GM12878 (cell line): ENCODE measurements at regions of chrX and their contacts with region 1.

Region 1: GRCh38 chrX:35380808-35381700 is 417.1 kb upstream of the MAGEB16 start:
- DNase-seq: peak; percentile 23
- ATAC-seq: peak; percentile 90
- H3K4me3 ChIP-seq: no peak overlapping the region
- H3K27ac ChIP-seq: no peak overlapping the region
- H3K4me1 ChIP-seq: peaks cover 3% of the 10 kb centered on the region
- H3K27me3 ChIP-seq: no peaks in the 10 kb centered on the region
- CTCF ChIP-seq: peak; percentile 71 to 86 (median 77)
- EP300 ChIP-seq: no peak
- POLR2A ChIP-seq: no peak
- RAD21 ChIP-seq: peak; percentile 83

Region 2: DNA sequence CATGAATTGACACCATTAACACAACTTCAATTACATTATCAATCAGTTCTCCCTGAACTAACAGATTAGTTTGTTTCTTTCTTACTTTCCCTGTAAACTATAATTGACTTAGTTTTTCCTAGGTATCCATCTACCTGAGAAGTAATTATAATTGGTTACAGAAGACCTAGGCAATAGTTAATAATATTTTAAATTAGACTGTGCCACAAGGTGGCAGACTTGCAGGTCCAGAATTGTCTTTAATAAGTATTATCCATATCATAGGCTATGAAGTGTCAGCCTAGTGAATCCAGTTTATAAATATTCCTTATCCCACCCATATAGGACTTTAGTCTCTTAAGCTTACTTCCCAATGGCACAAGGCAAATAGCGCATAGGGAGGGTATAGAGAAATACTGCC is 487.3 kb before region 1 on chrX:
- CTCF ChIA-PET with region 1: no interaction called
- POLR2A ChIA-PET with region 1: no interaction called
- RAD21 ChIA-PET with region 1: no interaction called
- SMC1A ChIA-PET with region 1: no interaction called
- in situ Hi-C with region 1: no loop called
- intact Hi-C with region 1: no loop called
- DNase-seq: no peak
- ATAC-seq: peak; percentile 55; the same call in 1 of the 3 replicates
- H3K4me3 ChIP-seq: no peak overlapping the region
- H3K27ac ChIP-seq: no peak overlapping the region
- H3K4me1 ChIP-seq: no peaks in the 10 kb centered on the region
- H3K27me3 ChIP-seq: no peaks in the 10 kb centered on the region
- CTCF ChIP-seq: peak in 1 of 3 experiments; percentile 22; a peak in 2 of 6 replicates
- EP300 ChIP-seq: no peak
- POLR2A ChIP-seq: no peak
- RAD21 ChIP-seq: no peak

Region 3: DNA sequence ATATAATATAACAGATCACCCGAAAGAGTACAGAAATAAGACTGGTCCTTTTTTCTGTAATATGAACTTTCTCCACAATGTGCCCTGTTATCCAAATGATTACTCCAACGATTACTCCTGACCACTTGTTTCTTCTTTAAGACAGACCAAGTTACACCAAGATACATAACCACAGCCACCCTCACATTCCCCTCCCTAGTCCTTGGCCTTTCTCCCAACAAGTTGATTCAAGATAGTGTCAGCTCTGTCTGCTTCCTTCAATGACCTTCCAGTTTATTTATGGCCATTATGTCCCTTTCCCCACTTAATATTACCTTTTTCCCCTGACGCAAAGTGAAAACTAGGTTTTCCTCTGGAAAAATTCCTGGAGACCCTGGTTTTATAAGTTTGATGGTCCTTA is 41.3 kb before region 1 on chrX:
- CTCF ChIA-PET with region 1: no interaction called
- POLR2A ChIA-PET with region 1: no interaction called
- RAD21 ChIA-PET with region 1: no interaction called
- SMC1A ChIA-PET with region 1: no interaction called
- in situ Hi-C with region 1: no loop called
- intact Hi-C with region 1: no loop called
- DNase-seq: no peak
- ATAC-seq: no peak
- H3K4me3 ChIP-seq: no peak overlapping the region
- H3K27ac ChIP-seq: no peak overlapping the region
- H3K4me1 ChIP-seq: no peaks in the 10 kb centered on the region
- H3K27me3 ChIP-seq: no peaks in the 10 kb centered on the region
- CTCF ChIP-seq: no peak
- EP300 ChIP-seq: no peak
- POLR2A ChIP-seq: no peak
- RAD21 ChIP-seq: no peak

Region 4: DNA sequence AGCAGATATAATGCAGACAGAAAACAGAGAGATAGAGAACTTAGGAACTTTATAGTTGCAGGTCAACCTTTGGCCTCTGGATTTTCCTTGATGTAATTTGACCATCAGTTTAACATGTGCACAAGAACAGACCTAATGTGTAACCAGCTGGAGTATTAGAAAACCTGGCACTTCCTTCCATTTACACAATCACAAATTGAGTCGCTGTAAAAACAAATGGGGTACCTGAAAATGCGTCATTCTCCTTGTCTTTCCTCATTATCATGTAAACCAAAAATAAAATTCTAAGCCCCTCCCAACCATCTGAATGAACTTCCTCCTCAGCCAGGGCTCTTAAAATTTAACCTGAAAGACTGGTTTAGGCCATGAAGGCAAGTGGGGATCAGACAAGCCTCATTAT is 58.6 kb after region 1 on chrX:
- CTCF ChIA-PET with region 1: interaction called, 4 read pairs
- POLR2A ChIA-PET with region 1: no interaction called
- RAD21 ChIA-PET with region 1: no interaction called
- SMC1A ChIA-PET with region 1: interaction called, 5 read pairs
- in situ Hi-C with region 1: no loop called
- intact Hi-C with region 1: loop called (anchors 5 kb)
- DNase-seq: no peak
- ATAC-seq: no peak
- H3K4me3 ChIP-seq: no peak overlapping the region
- H3K27ac ChIP-seq: no peak overlapping the region
- H3K4me1 ChIP-seq: peaks cover 4% of the 10 kb centered on the region; the same call in 1 of the 2 replicates
- H3K27me3 ChIP-seq: no peaks in the 10 kb centered on the region
- CTCF ChIP-seq: no peak
- EP300 ChIP-seq: no peak
- POLR2A ChIP-seq: no peak
- RAD21 ChIP-seq: no peak

Region 5: DNA sequence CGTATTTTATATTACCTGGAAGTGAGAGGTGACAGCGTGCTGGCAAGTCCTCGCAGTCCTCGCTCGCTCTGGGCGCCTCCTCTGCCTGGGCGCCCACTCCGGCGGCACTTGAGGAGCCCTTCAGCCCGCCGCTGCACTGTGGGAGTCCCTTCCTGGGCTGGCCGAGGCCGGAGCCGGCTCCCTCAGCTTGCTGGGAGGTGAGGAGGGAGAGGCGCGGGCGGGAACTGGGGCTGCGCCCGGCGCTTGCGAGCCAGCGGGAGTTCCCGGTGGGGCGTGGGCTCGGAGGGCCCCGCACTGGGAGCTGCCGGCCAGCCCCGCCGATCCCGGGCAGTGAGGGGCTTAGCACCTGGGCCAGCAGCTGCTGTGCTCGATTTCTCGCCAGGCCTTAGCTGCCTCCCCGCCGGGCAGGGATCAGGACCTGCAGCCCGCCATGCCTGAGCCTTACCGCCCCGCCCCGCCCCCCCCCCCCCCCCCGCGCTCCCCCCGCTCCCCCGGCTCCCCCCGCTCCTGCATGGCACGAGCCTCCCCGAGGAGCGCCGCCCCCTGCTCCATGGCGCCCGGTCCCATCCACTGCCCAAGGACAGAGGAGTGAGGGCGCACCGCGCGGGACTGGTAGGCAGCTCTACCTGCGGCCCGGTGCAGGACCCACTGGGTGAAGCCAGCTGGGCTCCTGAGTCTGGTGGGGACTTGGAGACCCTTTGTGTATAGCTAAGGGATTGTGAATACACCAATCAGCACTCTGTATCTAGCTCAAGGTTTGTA is 118.2 kb after region 1 on chrX:
- CTCF ChIA-PET with region 1: no interaction called
- POLR2A ChIA-PET with region 1: no interaction called
- RAD21 ChIA-PET with region 1: no interaction called
- SMC1A ChIA-PET with region 1: no interaction called
- in situ Hi-C with region 1: no loop called
- intact Hi-C with region 1: loop called (anchors 5 kb)
- DNase-seq: no peak
- ATAC-seq: no peak
- H3K4me3 ChIP-seq: no peak overlapping the region
- H3K27ac ChIP-seq: no peak overlapping the region
- H3K4me1 ChIP-seq: no peaks in the 10 kb centered on the region
- H3K27me3 ChIP-seq: no peaks in the 10 kb centered on the region; a peak in 1 of 4 replicates
- CTCF ChIP-seq: no peak
- EP300 ChIP-seq: no peak
- POLR2A ChIP-seq: no peak
- RAD21 ChIP-seq: no peak

Region 6: DNA sequence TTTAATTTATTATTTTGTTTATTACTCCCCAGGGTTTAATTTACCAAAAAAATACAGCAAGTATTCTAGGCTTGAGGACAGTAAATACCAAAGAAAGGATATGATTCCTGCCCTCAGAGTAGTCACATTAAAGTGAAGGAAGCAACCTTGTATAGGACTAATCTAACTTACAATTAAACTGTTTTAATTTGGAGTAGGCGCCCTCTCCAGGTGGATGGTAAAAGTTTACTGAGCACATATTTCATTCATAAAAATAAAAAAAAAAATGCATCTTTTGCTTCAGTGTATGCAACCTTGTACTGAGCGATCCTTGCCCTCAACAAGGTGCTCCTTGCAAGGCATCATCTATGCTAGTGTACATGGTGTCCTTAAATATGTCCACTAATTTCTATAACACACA is 345.1 kb after region 1 on chrX:
- CTCF ChIA-PET with region 1: interaction called, 27 read pairs
- POLR2A ChIA-PET with region 1: no interaction called
- RAD21 ChIA-PET with region 1: interaction called, 20 read pairs
- SMC1A ChIA-PET with region 1: interaction called, 12 read pairs
- in situ Hi-C with region 1: loop called (anchors 10 kb)
- intact Hi-C with region 1: loop called (anchors 5 kb)
- DNase-seq: no peak
- ATAC-seq: peak; percentile 68
- H3K4me3 ChIP-seq: no peak overlapping the region
- H3K27ac ChIP-seq: no peak overlapping the region
- H3K4me1 ChIP-seq: no peaks in the 10 kb centered on the region
- H3K27me3 ChIP-seq: no peaks in the 10 kb centered on the region
- CTCF ChIP-seq: peak in 2 of 3 experiments; percentile 8 to 11; a peak in 2 of 6 replicates
- EP300 ChIP-seq: no peak
- POLR2A ChIP-seq: no peak
- RAD21 ChIP-seq: peak; percentile 44; the same call in 1 of the 2 replicates

Region 7: DNA sequence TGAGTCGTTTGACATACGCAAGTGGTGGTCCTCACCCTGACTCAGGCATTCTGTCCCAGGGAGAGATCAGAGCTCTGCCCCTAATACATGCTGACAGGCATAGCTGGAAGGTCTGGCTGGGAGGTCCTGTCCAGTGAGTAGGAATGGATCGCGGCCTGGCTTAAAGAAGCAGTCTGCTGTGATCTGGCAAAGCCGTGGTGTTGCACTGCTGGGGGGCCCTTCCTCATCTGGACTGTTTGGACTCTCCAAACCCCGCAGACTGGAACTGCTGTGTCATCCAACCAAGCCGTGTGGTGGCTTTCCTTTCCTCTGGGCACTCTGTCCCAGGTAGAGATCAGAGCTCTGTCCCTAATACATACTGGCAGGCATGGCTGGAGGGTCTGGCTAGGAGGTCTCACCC is 352.8 kb after region 1 on chrX:
- CTCF ChIA-PET with region 1: interaction called, 5 read pairs
- POLR2A ChIA-PET with region 1: no interaction called
- RAD21 ChIA-PET with region 1: interaction called, 5 read pairs
- SMC1A ChIA-PET with region 1: interaction called, 8 read pairs
- in situ Hi-C with region 1: loop called (anchors 10 kb)
- intact Hi-C with region 1: loop called (anchors 5 kb)
- DNase-seq: no peak
- ATAC-seq: no peak
- H3K4me3 ChIP-seq: no peak overlapping the region
- H3K27ac ChIP-seq: no peak overlapping the region
- H3K4me1 ChIP-seq: no peaks in the 10 kb centered on the region
- H3K27me3 ChIP-seq: no peaks in the 10 kb centered on the region
- CTCF ChIP-seq: no peak
- EP300 ChIP-seq: no peak
- POLR2A ChIP-seq: no peak
- RAD21 ChIP-seq: no peak

Region 8: GRCh38 chrX:36867143-36867542 is 1486.1 kb after region 1 on chrX:
- CTCF ChIA-PET with region 1: interaction called, 3 read pairs
- POLR2A ChIA-PET with region 1: no interaction called
- RAD21 ChIA-PET with region 1: no interaction called
- SMC1A ChIA-PET with region 1: no interaction called
- in situ Hi-C with region 1: loop called (anchors 25 kb)
- intact Hi-C with region 1: loop called (anchors 5 kb)
- DNase-seq: no peak
- ATAC-seq: peak; percentile 76
- H3K4me3 ChIP-seq: no peak overlapping the region
- H3K27ac ChIP-seq: no peak overlapping the region
- H3K4me1 ChIP-seq: no peaks in the 10 kb centered on the region
- H3K27me3 ChIP-seq: no peaks in the 10 kb centered on the region
- CTCF ChIP-seq: peak; percentile 37 to 62 (median 44); a peak in 5 of 6 replicates
- EP300 ChIP-seq: no peak
- POLR2A ChIP-seq: no peak
- RAD21 ChIP-seq: peak; percentile 63